GM13977 (cell line): ENCODE measurements at regions of chr16 and their contacts with region 1.

Region 1: GRCh38 chr16:84062734-84063640 is 20.4 kb upstream of the SLC38A8 start:
- DNase-seq: peak; percentile 72
- CTCF ChIP-seq: peak; percentile 79

Region 2: GRCh38 chr16:83926726-83927397 is 136.1 kb before region 1 on chr16:
- in situ Hi-C with region 1: no loop called
- DNase-seq: peak; percentile 87
- CTCF ChIP-seq: peak; percentile 95

Region 3: GRCh38 chr16:83952940-83953795 is 109.8 kb before region 1 on chr16 and contains the start of gene OSGIN1:
- in situ Hi-C with region 1: loop called (anchors 25 kb)
- DNase-seq: peak; percentile 86
- CTCF ChIP-seq: no peak